Naive thymus-derived CD4-positive, alpha-beta T cell (primary cell): ENCODE measurements at regions of chr13 and their contacts with region 1.

Region 1: GRCh38 chr13:25762795-25763377 is 288.9 kb downstream of the SHISA2 start:
- DNase-seq: peak in 5 of 9 donors; percentile 8 to 32 (median 24)
- ATAC-seq: peak; percentile 55
- H3K4me3 ChIP-seq: no peak overlapping the region
- H3K4me3 Mint-ChIP-seq: peak overlapping the region in 9 of 10 donors; percentile 33 to 74 (median 63)
- H3K27ac ChIP-seq: no peak overlapping the region
- H3K27ac Mint-ChIP-seq: peak overlapping the region in 6 of 9 donors; percentile 6 to 76 (median 54)
- H3K4me1 ChIP-seq: peaks cover 0 to 7% of the 10 kb centered on the region in 2 donors
- H3K4me1 Mint-ChIP-seq: peaks cover 14 to 31% (median 20%) of the 10 kb centered on the region in 7 donors
- H3K27me3 ChIP-seq: no peaks in the 10 kb centered on the region
- H3K27me3 Mint-ChIP-seq: peaks cover 0 to 6% (median 0%) of the 10 kb centered on the region in 5 donors

Region 2: GRCh38 chr13:25738342-25739196 is 24.3 kb before region 1 on chr13:
- CTCF ChIA-PET with region 1: no interaction called
- POLR2A ChIA-PET with region 1: no interaction called
- intact Hi-C with region 1: loop called in 1 of 2 experiments (anchors 2 kb)
- DNase-seq: peak in 3 of 9 donors; percentile 9 to 20 (median 9)
- ATAC-seq: peak; percentile 47
- H3K4me3 ChIP-seq: no peak overlapping the region
- H3K4me3 Mint-ChIP-seq: peak overlapping the region in 6 of 10 donors; percentile 8 to 62 (median 36)
- H3K27ac ChIP-seq: no peak overlapping the region
- H3K27ac Mint-ChIP-seq: peak overlapping the region; percentile 17 to 69 (median 44)
- H3K4me1 ChIP-seq: peaks cover 0 to 7% of the 10 kb centered on the region in 2 donors
- H3K4me1 Mint-ChIP-seq: peaks cover 16 to 32% (median 25%) of the 10 kb centered on the region in 7 donors
- H3K27me3 ChIP-seq: no peaks in the 10 kb centered on the region
- H3K27me3 Mint-ChIP-seq: peaks cover 0 to 13% (median 2%) of the 10 kb centered on the region in 5 donors

Region 3: DNA sequence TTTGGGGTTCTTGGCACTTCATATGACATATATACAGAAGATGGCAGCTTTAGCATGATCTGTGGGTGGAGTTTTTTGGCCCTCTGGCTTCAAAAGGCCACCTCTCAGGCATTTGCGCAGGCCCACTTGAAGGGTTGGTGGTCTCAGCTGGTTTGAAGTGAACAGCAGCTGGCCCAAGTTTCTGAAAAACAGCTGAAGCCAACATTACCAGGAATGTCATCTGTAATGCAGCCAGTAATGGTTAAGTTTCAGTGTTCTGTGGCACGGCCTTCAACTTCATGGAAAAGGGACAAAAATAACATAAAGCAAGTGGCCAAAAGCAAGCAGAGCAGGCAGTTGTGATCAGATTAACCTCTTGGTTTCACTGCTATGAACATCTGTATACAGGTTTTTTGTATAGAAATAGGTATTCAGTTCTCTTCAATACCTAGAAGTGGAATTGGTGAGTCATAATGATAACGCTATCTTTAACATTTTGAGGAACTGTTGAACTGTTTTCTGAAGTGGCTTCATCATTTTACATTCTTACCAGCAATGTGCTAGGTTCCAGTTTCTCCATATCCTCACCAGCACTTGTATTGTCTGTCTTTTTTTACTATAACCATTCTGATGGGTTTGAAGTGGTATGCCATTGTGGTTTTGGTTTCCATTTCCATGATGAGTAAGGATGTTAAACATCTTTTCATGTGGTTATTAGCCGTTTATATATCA is 43.5 kb after region 1 on chr13:
- CTCF ChIA-PET with region 1: no interaction called
- POLR2A ChIA-PET with region 1: no interaction called
- intact Hi-C with region 1: loop called in 1 of 2 experiments (anchors 1 kb)
- DNase-seq: no peak
- ATAC-seq: no peak
- H3K4me3 ChIP-seq: no peak overlapping the region
- H3K4me3 Mint-ChIP-seq: peak overlapping the region in 1 of 10 donors; percentile 37
- H3K27ac ChIP-seq: no peak overlapping the region
- H3K27ac Mint-ChIP-seq: peak overlapping the region in 1 of 9 donors; percentile 82
- H3K4me1 ChIP-seq: no peaks in the 10 kb centered on the region
- H3K4me1 Mint-ChIP-seq: peaks cover 0 to 22% (median 0%) of the 10 kb centered on the region in 7 donors
- H3K27me3 ChIP-seq: no peaks in the 10 kb centered on the region
- H3K27me3 Mint-ChIP-seq: peaks cover 0 to 15% (median 5%) of the 10 kb centered on the region in 5 donors

Region 4: GRCh38 chr13:25847145-25847544 is 84.3 kb after region 1 on chr13:
- CTCF ChIA-PET with region 1: no interaction called
- POLR2A ChIA-PET with region 1: no interaction called
- intact Hi-C with region 1: loop called in 1 of 2 experiments (anchors 1 kb)
- DNase-seq: peak in 7 of 9 donors; percentile 17 to 65 (median 47)
- ATAC-seq: peak; percentile 75
- H3K4me3 ChIP-seq: peak overlapping the region; percentile 38
- H3K4me3 Mint-ChIP-seq: peak overlapping the region; percentile 26 to 75 (median 66)
- H3K27ac ChIP-seq: peak overlapping the region; percentile 39
- H3K27ac Mint-ChIP-seq: peak overlapping the region; percentile 6 to 91 (median 72)
- H3K4me1 ChIP-seq: peaks cover 13 to 23% of the 10 kb centered on the region in 2 donors
- H3K4me1 Mint-ChIP-seq: peaks cover 21 to 48% (median 38%) of the 10 kb centered on the region in 7 donors
- H3K27me3 ChIP-seq: no peaks in the 10 kb centered on the region
- H3K27me3 Mint-ChIP-seq: peaks cover 0 to 3% (median 0%) of the 10 kb centered on the region in 5 donors

Region 5: GRCh38 chr13:26051657-26052311 is 288.9 kb after region 1 on chr13 and contains the start of gene SHISA2:
- CTCF ChIA-PET with region 1: no interaction called
- POLR2A ChIA-PET with region 1: no interaction called
- intact Hi-C with region 1: loop called in 1 of 2 experiments (anchors 5 kb)
- DNase-seq: peak; percentile 2 to 51 (median 31)
- ATAC-seq: peak; percentile 82
- H3K4me3 ChIP-seq: peak within 1 kb of the TSS; percentile 39
- H3K4me3 Mint-ChIP-seq: peak within 1 kb of the TSS; percentile 77 to 89 (median 83)
- H3K27ac ChIP-seq: peak within 1 kb of the TSS; percentile 13
- H3K27ac Mint-ChIP-seq: peak within 1 kb of the TSS in 4 of 9 donors; percentile 16 to 67 (median 60)
- H3K4me1 ChIP-seq: peaks cover 0 to 11% of the 10 kb centered on the region in 2 donors
- H3K4me1 Mint-ChIP-seq: peaks cover 0 to 37% (median 17%) of the 10 kb centered on the region in 7 donors
- H3K27me3 ChIP-seq: peaks cover 0 to 6% of the 10 kb centered on the region in 2 donors
- H3K27me3 Mint-ChIP-seq: peaks cover 0 to 71% (median 29%) of the 10 kb centered on the region in 5 donors
- total RNA-seq, gene SHISA2: 0.98 to 3.6 (median 1.6) TPM